ENCODE measurements at regions of chr1 and their contacts with region 1.

Region 1: GRCh38 chr1:32013386-32014198 is at the start of gene KHDRBS1:
- DNase-seq: peak; percentile 99
- ATAC-seq: peak; percentile 90
- H3K4me3 ChIP-seq: peak within 1 kb of the TSS; percentile 94
- H3K27ac ChIP-seq: peak within 1 kb of the TSS; percentile 93
- H3K4me1 ChIP-seq: 0 out of 2 replicates have a peak, but pooled peaks cover 3% of the 10 kb centered on the region
- H3K27me3 ChIP-seq: no peaks in the 10 kb centered on the region
- CTCF ChIP-seq: no peak
- POLR2A ChIP-seq: peak; percentile 94
- RAD21 ChIP-seq: no peak
- total RNA-seq, gene KHDRBS1: 33.7 and 39.7 TPM in 2 replicates

Region 2: GRCh38 chr1:31880890-31881687 is 132.5 kb before region 1 on chr1:
- CTCF ChIA-PET with region 1: no interaction called
- POLR2A ChIA-PET with region 1: no interaction called
- dilution Hi-C with region 1: no loop called
- in situ Hi-C with region 1: no loop called
- intact Hi-C with region 1: no loop called
- DNase-seq: peak; percentile 12
- ATAC-seq: peak; percentile 62
- H3K4me3 ChIP-seq: no peak overlapping the region
- H3K27ac ChIP-seq: no peak overlapping the region
- H3K4me1 ChIP-seq: peaks cover 4% of the 10 kb centered on the region
- H3K27me3 ChIP-seq: peaks cover 2% of the 10 kb centered on the region; the same call in 1 of the 2 replicates
- CTCF ChIP-seq: no peak
- POLR2A ChIP-seq: no peak
- RAD21 ChIP-seq: no peak

Region 3: GRCh38 chr1:31991182-31991581 is 22.4 kb before region 1 on chr1:
- CTCF ChIA-PET with region 1: no interaction called
- POLR2A ChIA-PET with region 1: interaction called, 15 read pairs
- dilution Hi-C with region 1: no loop called
- in situ Hi-C with region 1: no loop called
- intact Hi-C with region 1: no loop called
- DNase-seq: no peak
- ATAC-seq: no peak
- H3K4me3 ChIP-seq: no peak overlapping the region
- H3K27ac ChIP-seq: no peak overlapping the region
- H3K4me1 ChIP-seq: no peaks in the 10 kb centered on the region
- H3K27me3 ChIP-seq: peaks cover 4% of the 10 kb centered on the region
- CTCF ChIP-seq: no peak
- POLR2A ChIP-seq: no peak
- RAD21 ChIP-seq: no peak

Region 4: GRCh38 chr1:32045772-32046171 is 32.2 kb after region 1 on chr1:
- CTCF ChIA-PET with region 1: no interaction called
- POLR2A ChIA-PET with region 1: no interaction called
- dilution Hi-C with region 1: no loop called
- in situ Hi-C with region 1: no loop called
- intact Hi-C with region 1: loop called (anchors 2 kb)
- DNase-seq: no peak
- ATAC-seq: no peak
- H3K4me3 ChIP-seq: no peak overlapping the region
- H3K27ac ChIP-seq: no peak overlapping the region
- H3K4me1 ChIP-seq: peaks cover 12% of the 10 kb centered on the region
- H3K27me3 ChIP-seq: no peaks in the 10 kb centered on the region
- CTCF ChIP-seq: no peak
- POLR2A ChIP-seq: no peak
- RAD21 ChIP-seq: no peak

Measured in IMR-90 (cell line).